A549 (cell line): ENCODE measurements at regions of chr17 and their contacts with region 1.

Region 1: GRCh38 chr17:35788504-35789368 is 6.7 kb downstream of the MMP28 start:
- DNase-seq: peak; percentile 85 to 91
- ATAC-seq: peak; percentile 90
- H3K4me3 ChIP-seq: no peak overlapping the region
- H3K27ac ChIP-seq: peak overlapping the region; percentile 83 to 93
- H3K4me1 ChIP-seq: peaks cover 67% of the 10 kb centered on the region
- CTCF ChIP-seq: no peak
- EP300 ChIP-seq: no peak
- POLR2A ChIP-seq: no peak
- RAD21 ChIP-seq: no peak

Region 2: GRCh38 chr17:35713069-35713728 is 75.5 kb before region 1 on chr17:
- CTCF ChIA-PET with region 1: no interaction called
- POLR2A ChIA-PET with region 1: no interaction called
- DNase-seq: no peak
- ATAC-seq: no peak
- H3K4me3 ChIP-seq: no peak overlapping the region
- H3K27ac ChIP-seq: no peak overlapping the region
- H3K4me1 ChIP-seq: peaks cover 14% of the 10 kb centered on the region; the same call in 1 of the 3 replicates
- CTCF ChIP-seq: no peak
- EP300 ChIP-seq: no peak
- POLR2A ChIP-seq: no peak
- RAD21 ChIP-seq: no peak

Region 3: DNA sequence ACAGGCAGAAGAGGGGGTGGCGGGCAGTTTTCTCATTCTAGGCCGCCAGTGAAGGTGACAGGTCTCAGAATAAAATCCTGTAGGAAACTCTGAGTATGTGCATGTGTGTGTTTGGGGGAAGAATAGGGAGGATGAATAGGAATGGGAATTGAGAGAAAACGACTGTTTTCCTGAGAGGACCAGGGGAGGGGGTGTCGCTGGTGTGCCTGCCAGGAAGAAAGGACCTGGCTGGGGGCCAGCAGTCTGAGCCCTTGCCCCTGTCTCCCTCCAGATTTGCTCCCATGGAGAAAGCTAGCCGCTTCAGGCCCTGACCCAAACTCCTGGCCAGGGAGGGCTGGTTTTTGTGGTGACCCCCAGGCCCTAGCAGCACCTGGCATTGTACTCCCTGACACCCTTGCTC is 13.7 kb before region 1 on chr17:
- CTCF ChIA-PET with region 1: interaction called, 2,039 read pairs
- POLR2A ChIA-PET with region 1: interaction called, 7 read pairs
- DNase-seq: no peak
- ATAC-seq: no peak
- H3K4me3 ChIP-seq: no peak overlapping the region
- H3K27ac ChIP-seq: peak overlapping the region; percentile 28 to 67; a peak in 3 of 6 replicates
- H3K4me1 ChIP-seq: peaks cover 35% of the 10 kb centered on the region
- CTCF ChIP-seq: no peak
- EP300 ChIP-seq: no peak
- POLR2A ChIP-seq: no peak
- RAD21 ChIP-seq: no peak